CD8-positive, alpha-beta T cell (primary cell): ENCODE measurements at regions of chr6 and their contacts with region 1.

Region 1: DNA sequence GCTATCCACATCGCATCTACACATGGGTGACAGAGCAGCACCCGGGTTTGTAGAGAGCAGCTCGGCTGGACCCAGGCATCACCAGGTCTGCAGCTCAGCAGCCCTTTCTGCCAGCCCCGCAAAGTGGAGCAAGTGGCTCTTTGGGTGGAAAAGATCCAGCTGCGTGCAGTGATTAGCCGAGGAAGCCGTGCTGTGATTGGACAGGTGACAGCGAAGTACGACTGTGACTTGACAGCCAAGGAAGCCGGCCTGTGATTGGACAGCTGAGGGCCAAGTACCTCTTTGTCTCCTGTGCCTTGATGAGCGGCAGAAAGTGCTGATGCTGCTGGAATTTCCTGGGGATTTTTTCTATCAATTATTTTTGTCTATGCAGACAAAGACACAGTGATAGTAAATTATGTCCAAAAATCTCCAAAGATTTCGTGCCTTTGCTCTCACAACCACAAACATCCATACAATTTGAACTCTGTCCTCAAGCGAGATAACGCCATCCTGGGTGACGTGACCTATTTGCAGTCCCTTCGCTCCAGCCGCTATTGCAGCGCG is 62.3 kb upstream of the GPR31 start:
- DNase-seq: no peak
- ATAC-seq: no peak
- H3K4me3 ChIP-seq: no peak overlapping the region
- H3K4me3 Mint-ChIP-seq: no peak overlapping the region
- H3K27ac ChIP-seq: no peak overlapping the region
- H3K27ac Mint-ChIP-seq: no peak overlapping the region
- H3K4me1 ChIP-seq: no peaks in the 10 kb centered on the region
- H3K4me1 Mint-ChIP-seq: no peaks in the 10 kb centered on the region
- H3K27me3 ChIP-seq: no peaks in the 10 kb centered on the region
- H3K27me3 Mint-ChIP-seq: peaks cover 2% of the 10 kb centered on the region
- CTCF ChIP-seq: no peak

Region 2: DNA sequence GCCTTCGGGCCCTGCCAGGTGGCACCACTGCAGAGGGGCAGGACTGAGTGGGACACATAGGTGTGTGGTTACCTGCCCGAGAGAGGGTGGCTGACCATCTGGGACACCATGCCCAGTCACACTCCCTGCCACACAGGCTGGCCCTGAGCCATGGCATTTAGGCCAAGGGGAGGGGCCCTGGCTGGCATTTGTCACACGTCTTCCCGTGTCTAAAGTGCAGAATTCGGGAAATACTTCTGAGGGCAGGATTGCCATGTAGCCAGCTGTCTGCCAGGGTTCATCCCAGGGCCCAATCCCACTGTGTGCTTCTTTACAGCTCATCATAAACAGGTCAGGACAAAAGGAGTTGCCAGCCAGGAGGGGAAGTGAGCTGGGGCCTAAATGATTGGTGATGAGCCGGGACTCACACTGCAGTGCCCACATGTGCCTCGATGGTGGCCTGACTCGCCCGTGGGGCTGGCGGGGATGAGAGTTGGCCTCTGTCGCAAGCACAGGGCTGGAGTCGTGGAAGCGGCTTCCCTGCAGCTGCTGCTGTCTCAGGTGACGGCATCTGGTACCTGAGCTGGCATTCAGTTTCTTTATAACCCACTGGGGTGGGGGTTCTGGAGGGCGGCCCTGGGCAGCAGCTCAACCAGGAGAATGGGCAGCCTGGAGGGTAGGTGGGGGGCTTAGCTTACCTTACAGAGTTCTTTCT is 65.2 kb after region 1 on chr6:
- CTCF ChIA-PET with region 1: interaction called, 3 read pairs
- POLR2A ChIA-PET with region 1: no interaction called
- intact Hi-C with region 1: loop called (anchors 2 kb)
- DNase-seq: no peak
- ATAC-seq: no peak
- H3K4me3 ChIP-seq: no peak overlapping the region
- H3K4me3 Mint-ChIP-seq: no peak overlapping the region
- H3K27ac ChIP-seq: no peak overlapping the region
- H3K27ac Mint-ChIP-seq: no peak overlapping the region
- H3K4me1 ChIP-seq: no peaks in the 10 kb centered on the region
- H3K4me1 Mint-ChIP-seq: no peaks in the 10 kb centered on the region
- H3K27me3 ChIP-seq: no peaks in the 10 kb centered on the region
- H3K27me3 Mint-ChIP-seq: no peaks in the 10 kb centered on the region
- CTCF ChIP-seq: no peak

Region 3: DNA sequence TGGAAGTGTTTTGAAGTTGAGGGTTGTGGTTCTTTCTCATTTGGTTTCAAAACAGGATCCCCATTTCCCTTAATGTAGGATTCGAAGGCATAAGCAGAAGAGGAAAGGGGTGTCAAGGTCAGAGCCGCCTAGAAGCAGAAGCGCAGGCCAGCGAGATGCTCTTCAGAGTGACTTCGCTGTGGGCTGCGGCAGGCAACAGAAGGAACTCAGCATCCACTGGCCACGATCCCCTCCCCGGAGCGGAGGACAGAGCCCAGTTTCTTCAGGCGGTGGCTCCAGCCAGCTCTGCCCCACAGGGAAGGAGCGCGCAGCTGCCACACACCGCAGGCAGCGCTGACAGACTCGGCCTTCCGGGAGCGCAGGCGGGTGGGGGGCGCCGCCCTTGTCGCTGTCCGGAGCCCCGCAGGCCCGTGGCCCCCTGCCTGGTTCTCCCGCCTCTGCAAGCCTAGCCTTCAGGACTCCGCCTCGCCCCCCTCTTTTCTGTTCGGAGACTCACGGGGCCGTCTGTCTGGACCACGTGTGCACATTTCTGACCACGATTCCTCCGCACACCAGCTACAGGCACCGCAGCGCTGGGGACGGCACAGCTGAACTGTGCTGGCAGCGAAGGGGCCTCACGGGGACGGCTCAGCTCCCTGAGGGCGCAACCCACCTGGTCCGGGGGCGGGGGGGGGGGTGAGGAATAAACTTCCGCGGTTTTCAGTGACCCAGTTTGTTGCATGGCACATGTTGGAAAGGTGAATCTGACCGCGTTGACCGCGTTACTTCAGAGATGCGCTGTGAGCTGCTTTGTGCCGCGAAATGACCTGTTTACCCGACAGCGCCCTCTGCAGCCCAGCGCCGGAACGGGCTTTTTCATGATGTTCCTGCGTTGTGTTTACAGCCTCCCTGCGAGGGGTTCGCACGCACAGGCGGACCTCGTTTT is 131.0 kb after region 1 on chr6:
- CTCF ChIA-PET with region 1: interaction called, 6 read pairs
- POLR2A ChIA-PET with region 1: no interaction called
- intact Hi-C with region 1: loop called in 1 of 2 experiments (anchors 5 kb)
- DNase-seq: peak; percentile 66 to 90 (median 79)
- ATAC-seq: peak; percentile 78
- H3K4me3 ChIP-seq: peak overlapping the region; percentile 58 to 62
- H3K4me3 Mint-ChIP-seq: peak overlapping the region; percentile 89
- H3K27ac ChIP-seq: no peak overlapping the region
- H3K27ac Mint-ChIP-seq: peak overlapping the region; percentile 46
- H3K4me1 ChIP-seq: peaks cover 10% of the 10 kb centered on the region
- H3K4me1 Mint-ChIP-seq: peaks cover 12% of the 10 kb centered on the region
- H3K27me3 ChIP-seq: peaks cover 0 to 3% of the 10 kb centered on the region in 2 experiments
- H3K27me3 Mint-ChIP-seq: peaks cover 7% of the 10 kb centered on the region
- CTCF ChIP-seq: peak; percentile 86

Region 4: DNA sequence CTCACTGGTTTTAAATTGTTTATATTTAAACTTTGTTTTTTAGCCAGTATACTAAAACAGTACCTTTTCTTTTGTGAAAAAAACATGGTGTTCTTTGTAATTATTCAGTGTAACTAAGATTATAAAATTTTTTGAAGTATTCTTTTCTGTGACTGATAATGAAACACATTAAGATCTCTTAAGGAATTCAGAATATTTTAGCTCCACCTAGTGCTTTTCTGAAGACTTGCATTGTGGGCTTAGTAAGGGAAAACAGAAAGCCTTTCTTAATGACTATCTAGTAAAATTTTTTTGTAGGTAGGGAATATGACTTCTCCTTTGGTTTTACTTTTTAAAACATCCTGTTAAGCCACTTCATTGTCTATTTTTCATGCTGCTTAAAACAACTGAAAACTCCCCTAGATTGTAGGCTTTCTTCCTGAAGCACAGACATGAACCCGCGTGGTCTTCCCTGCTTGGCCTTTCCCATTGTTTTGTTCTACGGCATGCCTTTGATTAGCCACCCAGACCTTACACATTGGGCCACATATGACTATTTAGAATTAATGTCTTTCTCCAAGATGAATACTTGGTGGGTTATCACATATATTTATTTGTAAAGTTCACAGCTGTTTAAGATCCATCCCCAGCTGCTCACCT is 678.8 kb after region 1 on chr6:
- CTCF ChIA-PET with region 1: no interaction called
- POLR2A ChIA-PET with region 1: no interaction called
- intact Hi-C with region 1: loop called in 1 of 2 experiments (anchors 2 kb)
- DNase-seq: peak in 2 of 9 experiments; percentile 7 to 8
- ATAC-seq: no peak
- H3K4me3 ChIP-seq: no peak overlapping the region
- H3K4me3 Mint-ChIP-seq: no peak overlapping the region
- H3K27ac ChIP-seq: no peak overlapping the region
- H3K27ac Mint-ChIP-seq: no peak overlapping the region
- H3K4me1 ChIP-seq: no peaks in the 10 kb centered on the region
- H3K4me1 Mint-ChIP-seq: no peaks in the 10 kb centered on the region
- H3K27me3 ChIP-seq: no peaks in the 10 kb centered on the region
- H3K27me3 Mint-ChIP-seq: peaks cover 2% of the 10 kb centered on the region
- CTCF ChIP-seq: peak; percentile 55